Activated CD8-positive, alpha-beta memory T cell treated with anti-CD3 and anti-CD28 coated beads, Interleukin-2, amount 10 ng/mL, durations not matched to agents 7 days and 5 days (primary cell): ENCODE measurements at regions of chr13 and their contacts with region 1.

Region 1: GRCh38 chr13:31236211-31236786 is 36.5 kb downstream of the B3GLCT start:
- DNase-seq: no peak
- ATAC-seq: no peak
- H3K4me3 Mint-ChIP-seq: no peak overlapping the region
- H3K27ac Mint-ChIP-seq: no peak overlapping the region
- H3K4me1 Mint-ChIP-seq: no peaks in the 10 kb centered on the region
- H3K27me3 Mint-ChIP-seq: no peaks in the 10 kb centered on the region

Region 2: GRCh38 chr13:31073859-31074718 is 162.2 kb before region 1 on chr13:
- CTCF ChIA-PET with region 1: no interaction called
- DNase-seq: peak; percentile 59
- ATAC-seq: peak; percentile 80
- H3K4me3 Mint-ChIP-seq: no peak overlapping the region
- H3K27ac Mint-ChIP-seq: peak overlapping the region; percentile 16
- H3K4me1 Mint-ChIP-seq: peaks cover 3% of the 10 kb centered on the region
- H3K27me3 Mint-ChIP-seq: peaks cover 11% of the 10 kb centered on the region

Region 3: DNA sequence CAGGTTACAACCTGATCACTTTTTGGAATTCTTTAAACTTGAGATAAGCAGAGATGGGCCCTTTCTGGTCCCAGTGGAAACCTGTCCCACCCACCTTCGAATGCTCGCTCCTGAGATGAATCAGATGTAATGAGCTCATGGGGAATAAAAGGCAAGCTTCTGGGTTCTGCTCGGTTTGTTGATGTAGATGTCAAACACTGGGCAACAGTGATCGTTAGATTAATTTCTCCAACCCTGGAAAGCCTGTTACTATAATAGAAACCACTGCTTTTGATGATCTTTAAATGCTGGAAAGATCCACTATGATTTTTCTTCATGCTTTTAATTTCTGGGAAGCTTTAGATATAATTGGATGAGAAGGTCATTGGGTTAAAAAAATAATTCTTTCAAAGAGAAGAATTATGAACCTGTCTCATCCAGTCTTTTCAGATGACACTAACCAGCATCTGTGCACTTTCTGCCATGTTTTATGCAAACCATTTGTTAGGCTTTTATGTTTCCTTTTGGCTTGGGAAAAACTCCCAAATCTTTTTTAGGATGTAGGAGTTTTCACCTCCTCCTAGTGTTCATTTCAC is 12.8 kb after region 1 on chr13:
- CTCF ChIA-PET with region 1: interaction called, 17 read pairs
- DNase-seq: no peak
- ATAC-seq: no peak
- H3K4me3 Mint-ChIP-seq: no peak overlapping the region
- H3K27ac Mint-ChIP-seq: no peak overlapping the region
- H3K4me1 Mint-ChIP-seq: no peaks in the 10 kb centered on the region
- H3K27me3 Mint-ChIP-seq: no peaks in the 10 kb centered on the region

Region 4: GRCh38 chr13:31424117-31424729 is 187.9 kb after region 1 on chr13:
- CTCF ChIA-PET with region 1: interaction called, 21 read pairs
- DNase-seq: peak; percentile 75
- ATAC-seq: peak; percentile 87
- H3K4me3 Mint-ChIP-seq: no peak overlapping the region
- H3K27ac Mint-ChIP-seq: no peak overlapping the region
- H3K4me1 Mint-ChIP-seq: peaks cover 2% of the 10 kb centered on the region
- H3K27me3 Mint-ChIP-seq: peaks cover 15% of the 10 kb centered on the region